Psoas muscle (tissue), 8 donors: ENCODE measurements at regions of chr2 and their contacts with region 1.

Region 1: DNA sequence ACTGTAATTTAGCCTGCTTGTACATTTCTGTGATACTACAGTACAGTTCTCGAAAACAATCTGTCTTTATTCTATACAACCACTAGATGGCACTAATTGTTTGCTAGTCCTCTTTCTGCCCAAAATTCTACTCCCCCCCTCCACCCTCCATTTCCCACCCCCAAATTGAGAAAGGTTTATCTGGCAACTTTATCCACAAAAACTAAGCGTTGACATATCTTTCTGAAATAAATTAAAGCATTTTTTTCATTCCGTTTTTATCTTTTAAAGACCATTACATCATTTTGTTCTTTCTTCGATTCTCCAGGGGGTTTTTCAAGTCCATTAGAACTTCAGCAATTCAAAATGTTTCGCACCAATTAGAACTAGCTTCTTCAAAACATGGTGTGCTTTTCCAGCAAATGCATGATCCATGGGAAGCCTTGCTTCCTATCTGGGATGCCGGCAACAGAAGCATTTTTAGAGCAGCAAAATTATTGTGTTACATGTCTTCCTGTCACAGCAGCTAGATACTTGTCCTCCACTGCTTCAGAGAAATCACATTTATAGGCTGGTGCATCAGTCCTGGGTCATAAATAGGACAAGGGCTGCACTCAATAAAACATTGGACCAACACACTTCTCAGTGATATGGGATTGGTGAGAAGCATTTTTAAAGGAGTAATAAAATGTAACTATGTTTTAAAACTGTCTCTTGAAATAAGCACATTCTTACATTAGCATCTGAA is 241.3 kb downstream of the PAX3 start:
- DNase-seq: no peak
- ATAC-seq: peak in 1 of 4 donors; percentile 67
- H3K4me3 ChIP-seq: peak overlapping the region; percentile 23
- H3K27ac ChIP-seq: no peak overlapping the region
- H3K4me1 ChIP-seq: no peaks in the 10 kb centered on the region
- H3K27me3 ChIP-seq: peaks cover 0 to 10% (median 2%) of the 10 kb centered on the region in 3 donors
- CTCF ChIP-seq: peak; percentile 69

Region 2: DNA sequence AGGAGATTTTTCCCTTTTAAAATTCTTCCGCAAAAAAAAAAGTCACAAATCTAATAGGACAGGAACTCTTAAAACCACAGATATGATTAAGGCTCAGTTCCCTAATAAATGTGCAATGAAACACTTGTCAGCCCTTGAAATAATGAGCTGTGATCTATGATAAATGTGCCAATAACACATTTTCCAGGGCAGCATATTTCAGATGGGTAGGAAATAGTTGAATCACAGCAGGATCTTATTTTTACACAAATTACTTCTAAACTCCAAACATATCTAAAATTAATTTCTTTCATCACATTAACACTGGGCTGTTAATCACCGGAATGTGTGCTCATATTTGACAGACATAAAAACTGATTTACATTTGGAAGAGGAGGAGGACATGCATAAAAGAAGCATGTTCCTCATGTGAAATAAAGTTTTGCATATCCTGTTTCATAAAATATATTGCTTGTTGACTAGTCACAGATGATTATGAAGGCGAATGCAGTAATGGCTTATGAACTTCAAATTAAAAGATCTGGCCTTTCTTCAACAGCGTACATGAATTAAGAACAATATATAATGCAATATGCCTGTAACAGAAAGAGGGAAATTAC is 40.2 kb before region 1 on chr2:
- intact Hi-C with region 1: no loop called
- DNase-seq: no peak
- ATAC-seq: no peak
- H3K4me3 ChIP-seq: no peak overlapping the region
- H3K27ac ChIP-seq: no peak overlapping the region
- H3K4me1 ChIP-seq: no peaks in the 10 kb centered on the region
- H3K27me3 ChIP-seq: no peaks in the 10 kb centered on the region
- CTCF ChIP-seq: no peak

Region 3: GRCh38 chr2:222290736-222291484 is 233.4 kb after region 1 on chr2:
- intact Hi-C with region 1: loop called in 1 of 2 experiments (anchors 5 kb)
- DNase-seq: peak in 1 of 2 donors; percentile 16
- ATAC-seq: peak; percentile 67 to 91 (median 81)
- H3K4me3 ChIP-seq: peak overlapping the region; percentile 58
- H3K27ac ChIP-seq: peak overlapping the region; percentile 24
- H3K4me1 ChIP-seq: peaks cover 9% of the 10 kb centered on the region
- H3K27me3 ChIP-seq: peaks cover 0 to 48% (median 23%) of the 10 kb centered on the region in 3 donors
- CTCF ChIP-seq: no peak

Region 4: DNA sequence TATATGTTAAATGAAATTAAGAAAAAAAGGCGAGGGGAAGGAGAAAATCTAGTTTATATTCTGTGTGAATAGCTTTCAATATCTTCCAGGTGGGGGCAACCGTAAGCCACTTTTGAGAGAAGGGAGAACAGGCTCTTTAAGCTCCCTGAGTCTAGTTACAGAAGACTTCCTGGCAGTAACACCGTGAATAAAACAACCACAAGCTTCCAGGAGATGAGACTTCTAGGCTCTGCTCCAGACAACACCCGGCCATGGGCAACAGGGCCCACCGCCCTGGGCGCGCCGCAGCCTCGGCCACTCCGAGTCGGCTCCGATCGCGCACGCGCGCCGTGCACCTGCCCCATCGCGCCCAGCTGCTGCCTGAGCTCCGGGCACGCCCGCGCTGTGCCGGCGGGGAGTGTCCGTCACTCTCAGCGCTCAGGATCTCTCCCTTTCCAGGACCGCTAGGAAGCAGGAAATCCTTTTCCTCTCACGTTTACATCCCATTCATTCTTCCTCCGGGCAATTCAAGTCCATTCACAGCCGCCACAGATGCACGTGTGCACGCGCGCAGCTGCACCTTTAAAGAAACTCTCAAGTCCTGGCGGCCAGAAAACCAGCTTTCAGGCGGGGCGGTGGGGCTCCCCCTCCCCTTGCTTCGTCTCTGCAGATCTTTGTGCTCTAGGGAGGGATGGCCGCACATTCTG is 260.7 kb after region 1 on chr2:
- intact Hi-C with region 1: loop called in 1 of 2 experiments (anchors 5 kb)
- DNase-seq: peak; percentile 66 to 82
- ATAC-seq: peak; percentile 91 to 96 (median 93)
- H3K4me3 ChIP-seq: peak overlapping the region; percentile 67
- H3K27ac ChIP-seq: peak overlapping the region; percentile 30
- H3K4me1 ChIP-seq: peaks cover 5% of the 10 kb centered on the region
- H3K27me3 ChIP-seq: peaks cover 0 to 17% (median 1%) of the 10 kb centered on the region in 3 donors
- CTCF ChIP-seq: peak; percentile 57

Region 5: DNA sequence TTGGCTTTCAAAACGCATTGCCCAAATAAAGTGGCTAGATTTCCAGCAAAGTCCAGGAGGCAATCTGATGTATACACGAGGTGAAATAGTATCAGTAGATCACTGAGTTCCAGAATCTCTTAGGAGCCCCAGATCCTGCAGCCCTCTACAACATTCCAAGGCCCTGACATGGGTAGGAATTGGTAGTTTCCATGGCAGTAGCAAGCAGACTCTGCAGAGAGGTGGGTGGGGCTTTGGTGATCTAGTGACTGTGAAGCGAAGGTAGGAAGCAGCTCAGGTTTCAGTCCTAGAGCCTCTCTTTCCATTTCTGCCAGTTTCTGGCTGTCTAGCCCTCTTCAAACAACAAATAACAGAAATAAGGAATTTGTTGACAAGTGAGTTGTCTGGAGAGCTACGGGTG is 353.0 kb after region 1 on chr2:
- intact Hi-C with region 1: no loop called
- DNase-seq: no peak
- ATAC-seq: no peak
- H3K4me3 ChIP-seq: no peak overlapping the region
- H3K27ac ChIP-seq: no peak overlapping the region
- H3K4me1 ChIP-seq: no peaks in the 10 kb centered on the region
- H3K27me3 ChIP-seq: no peaks in the 10 kb centered on the region
- CTCF ChIP-seq: no peak

Region 6: GRCh38 chr2:222561817-222562645 is 504.5 kb after region 1 on chr2:
- intact Hi-C with region 1: loop called in 1 of 2 experiments (anchors 5 kb)
- DNase-seq: no peak
- ATAC-seq: peak; percentile 51 to 74 (median 64)
- H3K4me3 ChIP-seq: no peak overlapping the region
- H3K27ac ChIP-seq: no peak overlapping the region
- H3K4me1 ChIP-seq: no peaks in the 10 kb centered on the region
- H3K27me3 ChIP-seq: peaks cover 0 to 1% (median 0%) of the 10 kb centered on the region in 3 donors
- CTCF ChIP-seq: peak; percentile 60

Region 7: DNA sequence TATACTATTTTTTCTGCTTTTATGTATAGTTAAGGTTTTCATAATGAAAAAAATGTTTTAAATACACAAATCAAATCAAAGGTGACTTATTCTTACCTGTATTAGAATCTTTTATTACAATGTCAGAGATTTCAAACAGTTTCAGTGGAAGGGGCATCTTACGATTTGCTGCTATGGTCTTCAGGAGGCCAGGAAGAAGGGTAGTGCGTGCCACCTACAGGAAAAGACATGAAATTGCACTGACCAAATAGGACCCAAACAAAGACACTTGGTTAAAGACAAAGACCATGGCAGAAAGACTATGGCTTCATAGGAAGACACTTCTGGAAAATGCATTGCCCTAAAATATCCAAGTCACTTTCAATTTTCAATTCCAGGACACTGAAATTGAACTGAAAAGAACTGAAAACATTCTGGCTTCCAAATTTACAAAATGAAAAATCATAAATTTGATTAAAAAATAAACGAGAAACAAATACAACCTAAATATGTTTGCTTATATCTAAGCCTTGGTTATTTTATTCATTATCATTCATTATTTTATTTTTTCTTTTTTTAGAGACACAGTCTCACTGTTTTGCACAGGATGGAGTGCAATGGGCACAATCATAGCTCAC is 556.3 kb after region 1 on chr2:
- intact Hi-C with region 1: loop called (anchors 5 kb)
- DNase-seq: no peak
- ATAC-seq: peak; percentile 55 to 85 (median 77)
- H3K4me3 ChIP-seq: no peak overlapping the region
- H3K27ac ChIP-seq: no peak overlapping the region
- H3K4me1 ChIP-seq: no peaks in the 10 kb centered on the region
- H3K27me3 ChIP-seq: no peaks in the 10 kb centered on the region
- CTCF ChIP-seq: peak; percentile 78